ENCODE measurements at regions of chr1 and their contacts with region 1.

Region 1: DNA sequence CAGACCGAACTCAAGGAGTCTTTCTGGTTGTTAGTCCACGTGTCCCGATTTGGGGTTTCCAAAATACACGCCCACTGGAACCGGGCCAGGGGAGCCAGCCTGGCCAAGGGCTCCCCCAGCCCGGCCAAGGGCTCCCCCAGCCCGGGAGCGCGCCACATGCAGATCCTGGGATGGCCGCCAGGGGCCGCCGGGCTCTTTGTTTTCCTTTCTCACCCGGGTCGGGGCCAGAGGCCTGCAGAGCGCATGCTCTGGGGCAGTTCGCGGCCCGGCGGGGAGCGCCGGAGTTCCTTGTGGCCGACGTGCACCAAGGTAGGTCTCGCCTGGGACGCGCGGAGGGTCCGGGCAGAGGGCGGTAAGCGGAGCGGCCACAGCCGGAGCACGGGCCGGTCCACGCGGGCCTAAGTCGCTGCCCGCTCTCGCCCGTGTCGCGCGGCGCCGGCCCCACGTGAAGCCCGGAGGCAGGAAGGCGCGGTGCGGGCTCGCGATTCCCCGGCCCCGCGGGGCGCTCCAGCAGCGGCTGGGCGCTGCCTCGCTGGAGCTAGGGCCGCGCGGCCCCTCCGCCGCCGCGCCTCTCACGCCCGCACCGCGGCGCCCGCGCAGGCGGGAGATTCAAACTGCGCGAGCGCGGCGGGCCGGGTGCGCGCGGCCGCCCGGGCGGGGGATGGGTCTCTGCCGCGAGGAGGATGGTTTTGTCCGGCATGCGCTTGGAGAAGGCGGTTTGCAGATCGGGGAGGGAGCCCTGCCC is 12.3 kb downstream of the RCC1 start:
- DNase-seq: peak; percentile 89 to 92
- H3K4me3 ChIP-seq: peak overlapping the region; percentile 60 to 70
- H3K27ac ChIP-seq: peak overlapping the region; percentile 58 to 62
- H3K4me1 ChIP-seq: peaks cover 0 to 18% (median 15%) of the 10 kb centered on the region in 4 donors
- H3K27me3 ChIP-seq: no peaks in the 10 kb centered on the region
- CTCF ChIP-seq: peak; percentile 98 to 99

Region 2: GRCh38 chr1:28552758-28553663 is 34.8 kb after region 1 on chr1 and contains the start of gene TRNAU1AP:
- intact Hi-C with region 1: loop called (anchors 5 kb)
- DNase-seq: peak; percentile 96 to 98
- H3K4me3 ChIP-seq: peak within 1 kb of the TSS; percentile 82 to 95
- H3K27ac ChIP-seq: peak within 1 kb of the TSS; percentile 90 to 97
- H3K4me1 ChIP-seq: peaks cover 0 to 18% (median 7%) of the 10 kb centered on the region in 4 donors
- H3K27me3 ChIP-seq: no peaks in the 10 kb centered on the region
- CTCF ChIP-seq: peak in 1 of 2 experiments; percentile 8

Region 3: GRCh38 chr1:28602536-28603439 is 84.6 kb after region 1 on chr1:
- intact Hi-C with region 1: loop called (anchors 2 kb)
- DNase-seq: peak; percentile 63 to 72
- H3K4me3 ChIP-seq: no peak overlapping the region
- H3K27ac ChIP-seq: peak overlapping the region; percentile 38 to 44
- H3K4me1 ChIP-seq: peaks cover 0 to 13% (median 5%) of the 10 kb centered on the region in 4 donors
- H3K27me3 ChIP-seq: no peaks in the 10 kb centered on the region
- CTCF ChIP-seq: peak; percentile 61 to 77

Measured in tibial artery (tissue), 4 donors.